Naive thymus-derived CD4-positive, alpha-beta T cell (primary cell): ENCODE measurements at regions of chr5 and their contacts with region 1.

Region 1: GRCh38 chr5:163489055-163489744 is 16.2 kb upstream of the MAT2B start:
- DNase-seq: peak in 3 of 9 donors; percentile 8 to 15 (median 12)
- ATAC-seq: peak; percentile 46
- H3K4me3 ChIP-seq: no peak overlapping the region
- H3K4me3 Mint-ChIP-seq: no peak overlapping the region
- H3K27ac ChIP-seq: no peak overlapping the region
- H3K27ac Mint-ChIP-seq: peak overlapping the region in 1 of 9 donors; percentile 27
- H3K4me1 ChIP-seq: no peaks in the 10 kb centered on the region
- H3K4me1 Mint-ChIP-seq: peaks cover 0 to 9% (median 0%) of the 10 kb centered on the region in 7 donors
- H3K27me3 ChIP-seq: no peaks in the 10 kb centered on the region
- H3K27me3 Mint-ChIP-seq: no peaks in the 10 kb centered on the region

Region 2: DNA sequence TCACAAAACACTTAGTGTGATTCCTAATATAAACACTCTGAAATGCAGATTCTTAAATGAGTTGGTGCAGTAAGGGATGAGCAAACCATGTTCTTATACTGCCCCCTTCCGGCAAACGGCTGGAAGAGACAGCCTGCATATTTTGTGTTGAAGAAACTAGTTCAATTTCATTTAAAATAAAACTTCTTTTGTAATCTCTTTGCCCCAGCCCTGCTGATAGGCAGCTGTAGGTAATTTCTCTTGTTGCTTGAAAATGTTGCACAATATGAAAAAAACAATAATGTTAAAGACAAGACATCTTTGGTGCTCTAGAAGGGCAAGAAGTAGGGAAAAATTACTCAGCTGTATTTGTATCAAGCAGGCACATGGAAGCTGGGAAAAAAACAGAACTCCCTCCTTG is 141.5 kb before region 1 on chr5:
- CTCF ChIA-PET with region 1: no interaction called
- POLR2A ChIA-PET with region 1: no interaction called
- intact Hi-C with region 1: no loop called
- DNase-seq: peak in 7 of 9 donors; percentile 14 to 50 (median 31)
- ATAC-seq: peak; percentile 57
- H3K4me3 ChIP-seq: no peak overlapping the region
- H3K4me3 Mint-ChIP-seq: no peak overlapping the region
- H3K27ac ChIP-seq: no peak overlapping the region
- H3K27ac Mint-ChIP-seq: no peak overlapping the region
- H3K4me1 ChIP-seq: no peaks in the 10 kb centered on the region
- H3K4me1 Mint-ChIP-seq: no peaks in the 10 kb centered on the region
- H3K27me3 ChIP-seq: peaks cover 0 to 3% of the 10 kb centered on the region in 2 donors
- H3K27me3 Mint-ChIP-seq: peaks cover 0 to 22% (median 4%) of the 10 kb centered on the region in 5 donors

Region 3: GRCh38 chr5:163473635-163474243 is 15.5 kb before region 1 on chr5:
- CTCF ChIA-PET with region 1: interaction called, 4 read pairs
- POLR2A ChIA-PET with region 1: interaction called, 3 read pairs
- intact Hi-C with region 1: loop called in 1 of 2 experiments (anchors 2 kb)
- DNase-seq: peak in 4 of 9 donors; percentile 12 to 48 (median 36)
- ATAC-seq: peak; percentile 84
- H3K4me3 ChIP-seq: no peak overlapping the region
- H3K4me3 Mint-ChIP-seq: no peak overlapping the region
- H3K27ac ChIP-seq: no peak overlapping the region
- H3K27ac Mint-ChIP-seq: no peak overlapping the region
- H3K4me1 ChIP-seq: no peaks in the 10 kb centered on the region
- H3K4me1 Mint-ChIP-seq: peaks cover 0 to 13% (median 0%) of the 10 kb centered on the region in 7 donors
- H3K27me3 ChIP-seq: no peaks in the 10 kb centered on the region
- H3K27me3 Mint-ChIP-seq: no peaks in the 10 kb centered on the region